Right lobe of liver (tissue), 6 donors: ENCODE measurements at regions of chr5 and their contacts with region 1.

Region 1: DNA sequence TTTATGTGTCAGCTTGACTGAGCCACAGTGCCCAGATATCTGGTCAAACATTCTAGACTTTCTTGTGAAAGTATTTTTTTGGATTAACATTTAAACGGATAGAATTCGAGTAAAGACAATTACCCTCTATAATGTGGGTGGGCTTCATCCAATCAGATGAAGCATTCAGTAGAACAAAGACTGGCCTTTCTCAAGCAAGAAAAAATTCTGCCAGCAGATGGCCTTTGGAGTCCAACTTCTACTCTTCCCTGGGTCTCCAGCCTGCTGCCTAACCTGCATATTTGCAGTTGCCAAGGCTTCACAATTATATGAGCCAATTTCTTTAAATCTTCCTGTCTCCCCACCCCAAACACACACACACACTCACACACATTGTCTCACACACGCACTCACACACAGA is 86.4 kb downstream of the MED10 start:
- DNase-seq: no peak
- ATAC-seq: peak; percentile 70 to 79 (median 74)
- H3K4me3 ChIP-seq: no peak overlapping the region
- H3K27ac ChIP-seq: no peak overlapping the region
- H3K4me1 ChIP-seq: no peaks in the 10 kb centered on the region
- H3K27me3 ChIP-seq: no peaks in the 10 kb centered on the region
- CTCF ChIP-seq: peak; percentile 31 to 55 (median 46)
- POLR2A ChIP-seq: no peak

Region 2: DNA sequence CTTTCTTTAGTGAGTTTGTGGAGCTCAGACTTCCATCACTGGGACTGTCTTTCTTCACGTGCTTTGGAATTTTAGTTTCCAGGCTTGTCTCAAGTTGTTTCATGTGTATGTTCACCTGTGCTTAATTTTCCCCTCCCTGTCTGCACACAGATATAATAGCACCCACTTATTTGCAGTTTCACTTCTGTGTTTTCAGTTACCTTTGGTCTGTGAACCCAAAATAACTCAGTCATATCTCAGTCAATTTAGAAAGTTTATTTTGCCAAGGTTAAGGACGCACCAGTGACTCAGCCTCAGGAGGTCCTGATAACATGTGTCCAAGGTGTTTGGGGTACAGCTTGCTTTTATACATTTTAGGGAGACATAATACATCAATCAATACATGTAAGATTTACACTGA is 539.1 kb before region 1 on chr5:
- intact Hi-C with region 1: no loop called
- DNase-seq: no peak
- ATAC-seq: no peak
- H3K4me3 ChIP-seq: no peak overlapping the region
- H3K27ac ChIP-seq: no peak overlapping the region
- H3K4me1 ChIP-seq: no peaks in the 10 kb centered on the region
- H3K27me3 ChIP-seq: no peaks in the 10 kb centered on the region
- CTCF ChIP-seq: no peak
- POLR2A ChIP-seq: no peak

Region 3: GRCh38 chr5:6181147-6181724 is 110.7 kb before region 1 on chr5:
- intact Hi-C with region 1: no loop called
- DNase-seq: no peak
- ATAC-seq: no peak
- H3K4me3 ChIP-seq: no peak overlapping the region
- H3K27ac ChIP-seq: no peak overlapping the region
- H3K4me1 ChIP-seq: no peaks in the 10 kb centered on the region
- H3K27me3 ChIP-seq: no peaks in the 10 kb centered on the region
- CTCF ChIP-seq: no peak
- POLR2A ChIP-seq: no peak

Region 4: GRCh38 chr5:6525910-6526309 is 233.9 kb after region 1 on chr5:
- intact Hi-C with region 1: loop called in 1 of 2 experiments (anchors 10 kb)
- DNase-seq: peak in 1 of 3 donors; percentile 63
- ATAC-seq: peak; percentile 90 to 99 (median 94)
- H3K4me3 ChIP-seq: no peak overlapping the region
- H3K27ac ChIP-seq: no peak overlapping the region
- H3K4me1 ChIP-seq: peaks cover 0 to 7% (median 3%) of the 10 kb centered on the region in 4 donors
- H3K27me3 ChIP-seq: no peaks in the 10 kb centered on the region
- CTCF ChIP-seq: peak; percentile 48 to 62 (median 59)
- POLR2A ChIP-seq: no peak